SK-N-SH (cell line): ENCODE measurements at regions of chr6 and their contacts with region 1.

Region 1: DNA sequence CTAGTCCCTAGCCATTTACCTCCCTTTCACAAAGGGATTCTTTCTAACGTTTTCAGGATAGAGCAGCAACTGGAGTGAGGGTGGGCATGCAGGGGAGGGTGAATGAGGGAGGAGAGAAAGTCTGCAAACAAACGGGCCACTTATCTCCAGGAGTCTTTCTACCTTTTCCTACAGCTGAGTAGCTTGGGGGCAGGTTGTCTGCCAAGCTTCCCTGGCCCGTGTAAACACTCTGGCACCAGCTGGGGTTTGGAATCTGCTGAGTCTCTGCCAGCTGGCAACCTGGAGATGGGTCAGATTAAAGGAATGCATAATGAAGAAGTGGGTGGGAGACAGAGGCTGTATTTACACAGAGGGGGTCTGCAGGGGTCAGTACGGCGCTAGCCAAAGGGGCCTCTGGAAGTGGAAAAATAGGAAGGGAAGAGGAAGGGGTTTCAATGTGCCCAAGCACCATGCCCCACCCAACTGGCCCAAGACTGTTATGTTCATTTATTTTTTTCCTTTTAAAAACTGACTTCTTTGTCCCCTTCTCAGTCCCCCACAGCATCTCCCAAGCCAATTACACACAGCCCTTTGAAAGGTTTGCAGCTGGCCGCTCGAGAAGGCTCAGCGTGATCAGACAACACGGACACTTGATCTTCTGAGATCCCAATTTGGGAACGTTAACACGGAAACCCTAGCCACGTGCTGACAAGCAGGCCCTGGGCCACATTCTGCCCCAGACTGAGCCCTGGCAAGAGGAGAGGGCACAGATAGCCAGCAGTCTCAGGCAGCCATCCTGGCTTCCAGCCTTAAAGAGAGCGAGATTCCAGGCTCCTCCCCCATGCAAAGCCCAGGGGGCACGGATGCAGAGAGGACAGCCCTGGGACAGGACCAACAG is 25.2 kb downstream of the TRAM2 start:
- DNase-seq: peak; percentile 75
- H3K4me3 ChIP-seq: peak overlapping the region in 1 of 2 experiments; percentile 2; a peak in 1 of 4 replicates
- H3K27ac ChIP-seq: peak overlapping the region; percentile 82 to 91
- H3K4me1 ChIP-seq: peaks cover 62 to 76% of the 10 kb centered on the region in 2 experiments
- H3K27me3 ChIP-seq: no peaks in the 10 kb centered on the region
- CTCF ChIP-seq: peak; percentile 28; the same call in 1 of the 2 replicates
- EP300 ChIP-seq: peak; percentile 86 to 88; a peak in 3 of 4 replicates
- RAD21 ChIP-seq: peak; percentile 54

Region 2: GRCh38 chr6:52566853-52567279 is 15.2 kb after region 1 on chr6:
- CTCF ChIA-PET with region 1: interaction called, 15 read pairs
- POLR2A ChIA-PET with region 1: no interaction called
- DNase-seq: no peak
- H3K4me3 ChIP-seq: no peak overlapping the region
- H3K27ac ChIP-seq: 0 out of 4 replicates have a peak overlapping the region, but pooled peaks of 1 of the 2 experiments have one; percentile 17
- H3K4me1 ChIP-seq: peaks cover 17 to 41% of the 10 kb centered on the region in 2 experiments
- H3K27me3 ChIP-seq: no peaks in the 10 kb centered on the region
- CTCF ChIP-seq: no peak
- EP300 ChIP-seq: no peak
- RAD21 ChIP-seq: no peak

Region 3: GRCh38 chr6:52598123-52598823 is 46.6 kb after region 1 on chr6:
- CTCF ChIA-PET with region 1: interaction called, 16 read pairs
- POLR2A ChIA-PET with region 1: no interaction called
- DNase-seq: peak; percentile 74
- H3K4me3 ChIP-seq: peak overlapping the region; percentile 17 to 34; a peak in 2 of 4 replicates
- H3K27ac ChIP-seq: peak overlapping the region; percentile 86 to 97
- H3K4me1 ChIP-seq: peaks cover 47 to 49% of the 10 kb centered on the region in 2 experiments
- H3K27me3 ChIP-seq: no peaks in the 10 kb centered on the region
- CTCF ChIP-seq: peak; percentile 80
- EP300 ChIP-seq: peak in 1 of 2 experiments; percentile 58; a peak in 2 of 4 replicates
- RAD21 ChIP-seq: peak; percentile 81